ENCODE measurements at regions of chr11 and their contacts with region 1.

Region 1: DNA sequence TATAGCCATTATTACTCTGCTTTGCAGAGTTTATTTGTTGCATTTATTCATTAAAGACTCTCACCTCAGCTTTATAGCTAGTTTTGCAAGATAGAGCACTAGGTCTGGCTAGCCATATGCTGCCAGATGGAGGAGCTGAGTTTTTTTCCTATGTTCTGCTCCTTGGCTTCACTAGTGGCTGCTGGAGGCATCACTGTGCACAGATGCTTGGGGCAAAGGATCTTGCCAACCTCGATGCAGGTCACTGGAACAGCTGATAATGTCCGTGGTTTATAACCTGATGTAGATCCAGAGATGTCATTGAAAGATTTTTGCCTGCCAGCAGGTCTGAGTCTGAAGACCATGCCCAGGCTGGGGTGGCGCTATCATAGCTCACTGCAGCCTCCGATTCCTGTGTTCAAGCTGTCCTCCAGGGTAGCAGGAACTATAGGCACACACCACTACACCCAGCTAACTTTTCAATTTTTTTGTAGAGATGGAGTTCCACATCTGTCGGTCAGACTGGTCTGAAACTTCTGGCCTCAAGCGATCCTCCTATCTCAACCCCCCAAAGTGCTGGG is 63.2 kb downstream of the PACS1 start:
- DNase-seq: peak; percentile 65 to 70
- H3K4me3 ChIP-seq: no peak overlapping the region
- H3K27ac ChIP-seq: peak overlapping the region in 2 of 3 donors; percentile 17 to 22
- H3K4me1 ChIP-seq: peaks cover 18 to 25% of the 10 kb centered on the region in 2 donors
- H3K27me3 ChIP-seq: no peaks in the 10 kb centered on the region
- CTCF ChIP-seq: peak in 2 of 6 experiments; percentile 13 to 30
- POLR2A ChIP-seq: no peak

Region 2: GRCh38 chr11:66045177-66045639 is 88.1 kb before region 1 on chr11:
- intact Hi-C with region 1: no loop called
- DNase-seq: peak; percentile 67 to 73
- H3K4me3 ChIP-seq: no peak overlapping the region
- H3K27ac ChIP-seq: peak overlapping the region; percentile 86 to 96 (median 95)
- H3K4me1 ChIP-seq: peaks cover 47 to 53% of the 10 kb centered on the region in 2 donors
- H3K27me3 ChIP-seq: no peaks in the 10 kb centered on the region
- CTCF ChIP-seq: peak; percentile 65 to 93 (median 80)
- POLR2A ChIP-seq: no peak

Region 3: GRCh38 chr11:66069715-66070603 is 63.3 kb before region 1 on chr11 and contains the start of gene PACS1:
- intact Hi-C with region 1: loop called (anchors 5 kb)
- DNase-seq: peak; percentile 75 to 79
- H3K4me3 ChIP-seq: peak within 1 kb of the TSS; percentile 35 to 99 (median 70)
- H3K27ac ChIP-seq: peak within 1 kb of the TSS; percentile 92 to 98 (median 97)
- H3K4me1 ChIP-seq: peaks cover 27 to 31% of the 10 kb centered on the region in 2 donors
- H3K27me3 ChIP-seq: no peaks in the 10 kb centered on the region
- CTCF ChIP-seq: peak in 2 of 6 experiments; percentile 11 to 16
- POLR2A ChIP-seq: peak; percentile 6 to 79
- total RNA-seq, gene PACS1: 39.6 to 67.7 (median 59.7) TPM

Region 4: GRCh38 chr11:66195867-66196266 is 62.6 kb after region 1 on chr11:
- intact Hi-C with region 1: no loop called
- DNase-seq: peak; percentile 58 to 64
- H3K4me3 ChIP-seq: no peak overlapping the region
- H3K27ac ChIP-seq: peak overlapping the region in 2 of 3 donors; percentile 48 to 52
- H3K4me1 ChIP-seq: peaks cover 0 to 15% of the 10 kb centered on the region in 2 donors
- H3K27me3 ChIP-seq: no peaks in the 10 kb centered on the region
- CTCF ChIP-seq: no peak
- POLR2A ChIP-seq: no peak

Measured in thyroid gland (tissue), 4 donors.